Ascending aorta (tissue), 2 donors: ENCODE measurements at regions of chr1 and their contacts with region 1.

Region 1: GRCh38 chr1:24744911-24745710 is at the start of gene CLIC4:
- DNase-seq: peak; percentile 98 to 100
- H3K4me3 ChIP-seq: peak within 1 kb of the TSS; percentile 97 to 99
- H3K27ac ChIP-seq: peak within 1 kb of the TSS; percentile 95 to 97
- H3K4me1 ChIP-seq: peaks cover 3 to 12% of the 10 kb centered on the region in 2 donors
- H3K27me3 ChIP-seq: no peaks in the 10 kb centered on the region
- CTCF ChIP-seq: peak in 2 of 3 experiments; percentile 17 to 43
- total RNA-seq, gene CLIC4: 494 TPM

Region 2: DNA sequence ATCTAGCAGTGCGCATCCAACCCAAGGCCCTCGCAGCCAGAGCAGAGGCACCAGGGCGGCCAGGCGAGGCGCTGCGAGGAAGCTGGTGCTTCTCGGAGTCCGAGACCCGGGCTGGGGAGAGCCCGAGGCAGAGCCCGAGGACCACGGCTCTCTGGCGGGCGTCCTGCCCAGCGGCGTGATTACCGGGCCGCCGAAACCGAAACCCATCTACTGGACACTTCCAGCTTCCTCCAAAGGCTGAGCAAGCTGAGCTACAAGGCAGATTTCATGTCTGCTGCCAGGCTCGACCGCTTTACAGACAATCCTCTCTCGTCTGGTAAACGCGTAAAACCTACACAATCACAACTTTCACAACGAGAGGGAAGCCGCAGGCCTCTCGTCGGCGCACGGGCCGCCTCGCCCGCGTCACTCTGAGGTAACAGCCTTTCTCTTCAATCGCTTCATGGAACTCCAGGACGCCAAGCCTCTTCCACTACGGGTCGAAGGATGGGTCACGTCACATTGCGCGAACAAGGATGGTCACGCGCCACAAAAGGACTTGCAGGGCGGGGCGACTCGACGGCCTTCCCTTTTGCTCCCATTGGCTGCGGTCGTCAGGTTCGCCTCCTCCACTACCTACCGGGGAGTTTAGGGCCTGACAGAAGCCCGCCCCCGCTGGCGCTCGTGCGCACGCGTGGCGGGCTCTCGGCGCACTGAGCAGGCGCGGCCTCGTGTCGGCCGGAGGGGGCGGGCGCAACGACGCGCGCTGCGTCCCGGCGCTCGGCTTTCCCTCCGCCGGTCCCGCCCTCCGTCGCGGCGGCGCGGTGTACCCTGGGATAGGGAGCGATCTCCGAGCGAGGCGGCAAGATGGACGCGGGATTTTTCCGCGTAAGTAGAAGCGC is 102.4 kb before region 1 on chr1 and contains the start of gene SRRM1:
- intact Hi-C with region 1: loop called (anchors 2 kb)
- DNase-seq: peak; percentile 98 to 100
- H3K4me3 ChIP-seq: peak within 1 kb of the TSS; percentile 73 to 88
- H3K27ac ChIP-seq: peak within 1 kb of the TSS; percentile 95 to 100
- H3K4me1 ChIP-seq: peaks cover 8 to 15% of the 10 kb centered on the region in 2 donors
- H3K27me3 ChIP-seq: no peaks in the 10 kb centered on the region
- CTCF ChIP-seq: peak in 2 of 3 experiments; percentile 10
- total RNA-seq, gene SRRM1: 90.5 TPM

Region 3: DNA sequence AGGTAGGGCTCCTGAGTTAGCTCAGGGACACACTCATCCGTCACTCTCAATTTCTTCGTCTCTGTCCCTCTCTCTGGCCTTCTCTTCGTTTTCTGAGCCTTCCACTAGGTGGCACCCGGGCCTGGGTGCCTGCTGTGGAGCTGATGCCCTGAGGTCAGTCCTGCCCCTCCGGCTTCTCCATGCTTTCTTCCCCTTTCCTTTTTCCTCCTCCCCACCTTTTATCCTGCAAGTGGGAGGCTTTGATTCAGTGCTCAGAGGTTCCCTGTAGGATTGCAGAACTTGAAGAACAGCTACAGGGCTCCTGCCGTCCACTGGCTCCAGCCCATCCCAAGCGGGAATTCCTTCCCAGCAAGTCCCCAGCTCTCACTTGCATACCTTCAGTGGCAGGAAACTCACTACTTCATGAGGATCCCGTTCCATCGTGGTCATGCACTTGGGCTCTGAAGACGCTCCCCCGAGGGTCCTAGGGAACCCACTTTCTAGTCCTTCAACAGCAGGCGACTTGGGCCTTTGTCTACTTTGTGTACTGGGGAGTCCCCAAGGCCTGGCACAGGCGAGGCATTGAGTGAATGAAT is 56.4 kb before region 1 on chr1:
- intact Hi-C with region 1: loop called (anchors 2 kb)
- DNase-seq: peak in 1 of 2 donors; percentile 87
- H3K4me3 ChIP-seq: no peak overlapping the region
- H3K27ac ChIP-seq: no peak overlapping the region
- H3K4me1 ChIP-seq: no peaks in the 10 kb centered on the region
- H3K27me3 ChIP-seq: no peaks in the 10 kb centered on the region
- CTCF ChIP-seq: peak; percentile 78 to 90 (median 82)

Region 4: DNA sequence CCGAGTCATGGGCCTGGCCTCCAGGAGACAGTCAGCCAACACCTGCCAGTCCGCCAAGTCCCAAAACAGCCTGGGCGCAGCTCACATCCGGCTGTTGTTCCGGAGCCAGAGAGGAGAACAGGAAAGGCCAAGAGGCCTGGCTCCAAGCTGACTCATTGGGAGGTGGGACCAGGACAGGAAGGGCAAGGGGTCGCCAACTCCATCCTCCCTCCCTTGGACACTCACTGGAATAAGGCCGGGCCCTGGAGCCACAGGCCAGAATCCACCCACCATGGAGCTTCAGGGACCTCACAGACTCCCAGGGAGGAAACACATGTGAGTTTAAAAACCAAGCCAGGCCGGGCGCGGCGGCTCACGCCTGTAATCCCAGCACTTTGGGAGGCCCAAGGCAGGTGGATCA is 25.0 kb before region 1 on chr1:
- intact Hi-C with region 1: loop called (anchors 1 kb)
- DNase-seq: peak; percentile 87 to 93
- H3K4me3 ChIP-seq: no peak overlapping the region
- H3K27ac ChIP-seq: peak overlapping the region; percentile 76 to 87
- H3K4me1 ChIP-seq: peaks cover 10 to 22% of the 10 kb centered on the region in 2 donors
- H3K27me3 ChIP-seq: no peaks in the 10 kb centered on the region
- CTCF ChIP-seq: no peak

Region 5: DNA sequence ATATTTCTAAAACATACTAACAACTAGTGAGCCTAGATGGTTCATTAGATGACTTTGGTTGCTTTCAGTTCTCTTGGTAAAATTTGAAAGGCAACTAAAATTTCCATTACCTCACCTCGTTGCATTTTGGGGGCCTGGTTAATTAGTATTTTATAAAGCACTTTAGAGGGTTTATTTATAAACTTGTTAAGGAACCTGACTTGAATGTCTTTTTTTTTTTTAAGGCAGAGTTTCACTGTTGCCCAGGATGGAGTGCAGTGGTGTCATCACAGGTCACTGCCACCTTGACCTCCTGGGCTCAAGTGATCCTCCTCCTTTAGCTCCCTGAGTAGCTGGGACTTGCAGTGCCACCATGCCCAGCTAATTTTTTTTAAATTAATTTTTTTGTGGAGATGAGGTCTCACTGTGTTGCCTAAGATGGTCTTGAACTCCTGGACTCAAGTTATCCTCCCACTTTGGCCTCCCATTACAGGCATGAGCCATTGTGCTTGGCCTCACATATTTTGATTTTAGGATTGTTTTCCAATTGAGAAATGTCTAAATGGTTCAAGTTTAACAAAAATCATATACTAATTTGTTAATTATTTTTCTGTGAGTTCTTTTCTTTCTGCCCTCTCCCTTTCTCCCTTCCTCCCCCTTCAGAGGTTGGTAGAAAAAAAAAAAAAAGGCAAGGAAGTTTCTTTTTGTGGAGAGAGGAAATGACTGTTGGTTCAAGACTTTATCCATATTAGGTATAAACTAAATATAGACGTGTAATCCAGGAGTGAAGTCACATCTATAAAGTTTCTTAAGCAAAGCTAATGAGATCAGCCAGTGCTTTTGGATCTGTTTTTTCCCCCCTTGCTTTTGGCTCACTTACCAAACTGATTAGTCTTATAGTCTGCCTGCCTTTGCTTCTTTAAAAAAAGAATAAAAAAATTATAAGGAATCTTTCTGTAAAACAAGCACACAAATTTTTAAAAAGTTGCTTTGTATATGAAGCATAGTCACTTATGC is 24.8 kb after region 1 on chr1:
- intact Hi-C with region 1: loop called (anchors 1 kb)
- DNase-seq: no peak
- H3K4me3 ChIP-seq: peak overlapping the region; percentile 10 to 25
- H3K27ac ChIP-seq: peak overlapping the region; percentile 93 to 97
- H3K4me1 ChIP-seq: peaks cover 6 to 74% of the 10 kb centered on the region in 2 donors
- H3K27me3 ChIP-seq: no peaks in the 10 kb centered on the region
- CTCF ChIP-seq: no peak

Region 6: DNA sequence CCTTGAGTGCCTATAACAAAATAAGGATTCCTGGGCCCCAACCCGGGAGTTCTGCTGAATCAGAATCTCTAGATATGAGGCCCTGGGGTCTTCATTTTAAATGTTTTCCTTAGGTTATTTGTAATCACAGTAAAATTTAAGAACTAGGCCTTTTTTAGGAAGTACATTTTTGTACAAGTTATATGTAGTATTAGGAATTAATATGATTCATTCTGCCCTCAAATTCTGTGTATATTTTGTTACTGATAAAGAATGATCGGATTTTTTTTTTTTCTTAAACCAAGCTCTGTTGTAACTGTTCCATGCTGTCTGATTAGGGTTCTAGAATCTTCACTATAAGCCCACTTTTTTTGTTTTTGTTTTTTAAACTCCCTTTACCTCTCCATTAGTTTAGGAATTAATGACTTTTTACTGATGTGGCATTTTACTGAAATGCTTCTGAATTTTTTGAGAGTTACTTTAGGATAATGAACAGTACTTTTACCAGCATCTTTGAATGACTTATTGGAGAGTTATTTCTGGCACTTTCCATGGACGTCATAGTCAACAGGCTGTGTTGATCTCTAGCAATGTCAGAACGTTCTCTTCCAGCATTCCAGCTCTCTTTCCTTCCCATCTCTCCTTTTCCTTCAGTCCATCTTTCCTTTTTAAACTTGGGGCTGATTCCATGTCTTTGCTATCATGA is 48.5 kb after region 1 on chr1:
- intact Hi-C with region 1: loop called (anchors 2 kb)
- DNase-seq: no peak
- H3K4me3 ChIP-seq: peak overlapping the region; percentile 3 to 16
- H3K27ac ChIP-seq: peak overlapping the region; percentile 65 to 83
- H3K4me1 ChIP-seq: peaks cover 0 to 65% of the 10 kb centered on the region in 2 donors
- H3K27me3 ChIP-seq: no peaks in the 10 kb centered on the region
- CTCF ChIP-seq: no peak

Region 7: GRCh38 chr1:24830680-24831272 is 85.7 kb after region 1 on chr1:
- intact Hi-C with region 1: loop called (anchors 5 kb)
- DNase-seq: no peak
- H3K4me3 ChIP-seq: no peak overlapping the region
- H3K27ac ChIP-seq: peak overlapping the region in 1 of 2 donors; percentile 13
- H3K4me1 ChIP-seq: peaks cover 4 to 51% of the 10 kb centered on the region in 2 donors
- H3K27me3 ChIP-seq: no peaks in the 10 kb centered on the region
- CTCF ChIP-seq: peak; percentile 60 to 80 (median 73)